Lower leg skin (tissue), 4 donors: ENCODE measurements at regions of chr18 and their contacts with region 1.

Region 1: DNA sequence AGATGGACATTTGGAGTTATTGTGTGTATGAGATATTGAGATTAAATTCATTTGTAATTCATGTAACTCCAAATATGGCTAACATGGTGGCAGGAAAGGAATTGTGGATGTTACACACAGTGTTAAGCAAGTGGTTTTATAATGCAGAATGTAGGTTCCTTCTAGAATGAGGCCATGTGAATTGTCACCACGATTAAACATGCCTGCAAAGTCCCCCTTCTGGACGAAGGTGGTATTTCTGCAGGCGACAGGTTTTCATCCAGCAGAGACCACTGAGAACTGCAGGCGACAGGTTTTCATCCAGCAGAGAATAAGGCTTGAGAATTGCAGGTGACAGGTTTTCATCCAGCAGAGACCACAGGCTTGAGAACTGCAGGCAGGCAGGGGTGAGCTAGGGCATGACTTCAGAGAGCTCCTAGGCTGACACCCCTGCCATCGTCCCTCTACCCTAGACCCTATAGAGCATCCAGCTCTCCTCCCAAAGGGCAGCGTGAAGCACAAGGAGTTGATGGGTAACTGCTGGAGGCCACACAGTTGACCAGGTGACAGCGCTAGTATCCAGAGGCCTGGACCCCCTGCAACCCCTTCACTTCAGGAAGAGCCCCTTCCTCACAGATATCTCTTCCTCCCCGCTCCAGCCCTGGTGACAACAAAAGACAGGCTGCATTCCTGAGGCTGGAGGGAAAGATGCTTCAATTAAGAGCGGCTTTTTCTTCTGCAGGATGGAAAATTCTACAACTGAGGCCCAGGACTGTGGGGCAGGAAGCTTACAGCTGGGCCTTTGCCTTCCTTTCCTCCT is 175.8 kb downstream of the LOXHD1 start:
- DNase-seq: peak; percentile 28 to 75
- H3K4me3 ChIP-seq: no peak overlapping the region
- CTCF ChIP-seq: no peak
- POLR2A ChIP-seq: no peak

Region 2: DNA sequence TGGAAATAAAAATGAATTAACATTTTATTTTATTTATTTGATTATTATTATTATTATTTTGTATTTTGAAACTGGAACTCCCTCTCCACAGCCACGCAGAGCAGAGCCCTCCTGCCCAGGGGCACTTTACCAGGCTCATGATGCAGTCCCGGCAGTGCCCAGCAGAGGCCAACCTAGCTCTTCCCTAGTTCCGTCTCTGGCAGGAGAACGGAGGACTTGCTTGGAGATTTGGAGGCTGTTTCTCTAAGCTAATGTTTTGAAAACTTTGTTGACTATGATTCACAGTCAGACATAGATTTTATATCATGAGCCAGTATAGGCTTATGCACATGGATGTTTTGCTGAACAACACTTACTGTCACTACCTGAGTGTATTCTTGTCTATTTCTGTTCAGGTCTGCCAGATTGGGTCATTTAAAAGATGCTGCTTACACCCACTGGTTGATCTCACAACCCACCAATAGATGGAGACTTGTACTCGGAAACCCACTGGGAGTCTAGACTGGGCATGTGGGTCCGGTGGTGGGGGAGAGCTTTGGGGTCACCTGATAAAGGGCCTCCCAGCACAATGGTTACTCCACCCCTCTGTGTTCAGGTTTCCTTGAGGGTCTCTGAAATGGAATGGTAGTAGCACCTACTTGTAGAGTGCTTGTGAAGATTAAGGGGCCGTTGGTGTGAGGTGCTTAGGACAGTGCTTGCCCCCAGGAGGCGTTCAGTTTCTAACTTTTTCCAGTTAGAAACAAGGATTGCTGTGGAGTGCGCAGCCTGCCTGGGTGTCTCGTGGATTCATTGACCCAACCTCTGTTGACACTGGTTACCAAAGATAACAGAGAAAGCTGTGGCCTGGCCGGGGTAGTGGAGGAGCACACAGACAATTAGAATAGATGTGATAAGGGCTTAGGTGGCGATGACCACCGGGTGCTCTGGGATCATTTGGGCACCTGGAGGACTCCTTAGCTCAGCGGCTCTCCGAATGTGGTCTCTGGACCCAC is 199.8 kb before region 1 on chr18:
- intact Hi-C with region 1: loop called (anchors 10 kb)
- DNase-seq: peak; percentile 37 to 87
- H3K4me3 ChIP-seq: no peak overlapping the region
- CTCF ChIP-seq: peak in 1 of 3 donors; percentile 24
- POLR2A ChIP-seq: no peak